ENCODE measurements at regions of chr7 and their contacts with region 1.

Region 1: GRCh38 chr7:29748286-29749108 is 57.8 kb upstream of the WIPF3 start:
- DNase-seq: peak in 1 of 2 experiments; percentile 69
- H3K4me3 ChIP-seq: no peak overlapping the region
- H3K27ac ChIP-seq: no peak overlapping the region
- H3K4me1 ChIP-seq: peaks cover 4% of the 10 kb centered on the region; the same call in 1 of the 2 replicates
- H3K27me3 ChIP-seq: no peaks in the 10 kb centered on the region
- CTCF ChIP-seq: peak; percentile 85

Region 2: DNA sequence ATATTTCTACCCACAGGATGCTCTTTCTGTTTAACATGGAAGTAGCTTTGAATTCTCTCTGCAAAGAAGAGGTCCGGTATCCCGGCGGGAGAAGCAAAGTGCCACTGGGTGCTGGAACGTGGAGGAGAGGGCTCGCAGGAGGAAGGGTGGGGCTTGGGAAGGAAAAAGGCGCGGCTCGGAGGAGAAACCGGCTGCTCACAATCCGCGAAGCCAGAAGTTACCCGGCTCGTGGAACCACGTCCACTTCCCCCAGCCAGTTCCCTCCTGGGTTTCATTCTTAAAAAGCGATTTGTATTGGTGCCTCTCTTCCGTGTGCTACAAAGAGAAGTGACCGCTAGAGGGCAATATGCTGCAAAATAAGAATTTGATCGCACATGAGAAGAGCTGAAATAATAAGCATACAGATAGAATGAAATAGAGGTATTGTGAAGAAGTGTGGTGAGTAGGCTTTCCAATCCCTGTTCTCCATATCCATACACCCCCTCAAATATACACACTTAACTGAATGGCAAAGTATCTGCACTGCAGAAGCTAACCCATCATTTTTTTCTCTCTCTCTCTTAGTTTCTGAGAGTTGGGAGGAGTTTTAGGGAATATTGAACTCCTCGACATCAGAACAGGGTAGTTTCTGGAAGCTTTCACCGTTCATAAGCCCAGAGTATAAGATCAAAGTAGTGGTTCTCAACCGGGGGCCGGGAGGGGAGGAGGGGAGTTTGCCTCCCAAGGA is 821.5 kb before region 1 on chr7:
- CTCF ChIA-PET with region 1: no interaction called
- POLR2A ChIA-PET with region 1: no interaction called
- intact Hi-C with region 1: loop called (anchors 10 kb)
- DNase-seq: peak; percentile 45 to 82
- H3K4me3 ChIP-seq: peak overlapping the region; percentile 54
- H3K27ac ChIP-seq: no peak overlapping the region
- H3K4me1 ChIP-seq: peaks cover 13% of the 10 kb centered on the region; the same call in 1 of the 2 replicates
- H3K27me3 ChIP-seq: no peaks in the 10 kb centered on the region
- CTCF ChIP-seq: peak; percentile 97

Region 3: DNA sequence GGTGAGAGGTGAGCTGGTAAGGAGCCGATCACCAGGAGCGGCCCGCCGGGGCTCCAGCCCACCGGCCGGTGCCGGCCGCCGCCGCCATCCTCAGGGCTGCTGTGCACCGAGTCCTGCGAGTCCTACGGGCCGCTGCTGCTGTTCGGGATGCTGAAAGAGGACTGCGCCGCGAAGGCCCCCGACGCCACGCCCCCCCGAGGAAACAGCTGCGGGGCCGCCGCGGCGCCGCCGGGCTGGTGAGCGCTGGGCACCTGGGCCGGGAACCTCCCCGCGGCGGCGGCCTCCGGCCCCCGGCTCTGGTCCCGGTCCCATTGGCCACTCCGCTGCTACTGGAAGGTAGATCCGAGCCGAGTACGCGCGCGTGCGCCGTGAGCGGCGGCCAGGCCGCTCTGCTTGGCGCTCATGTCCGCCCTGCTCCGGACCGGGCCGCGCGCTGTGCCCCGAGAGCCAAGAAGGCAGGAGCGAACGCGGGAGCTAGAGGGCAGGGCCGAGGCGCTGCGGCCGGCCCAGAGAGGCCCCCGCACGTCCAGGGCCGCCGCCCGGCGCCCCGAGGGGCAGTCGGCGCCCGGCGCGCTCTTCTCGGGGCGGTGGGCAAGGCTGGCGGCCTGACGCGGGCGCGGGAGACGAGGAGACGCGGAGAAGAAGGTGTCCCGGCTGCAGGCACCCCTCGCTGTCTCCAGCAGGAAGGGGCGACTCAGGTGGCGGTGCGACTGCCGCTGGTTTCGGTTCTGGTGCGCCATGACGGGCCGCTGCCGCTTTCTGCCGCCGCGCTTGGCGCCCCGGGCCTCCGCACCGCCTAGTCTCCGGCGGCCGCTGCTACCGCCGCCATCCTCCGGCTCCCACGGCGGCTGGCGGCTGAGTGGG is 63.5 kb before region 1 on chr7:
- CTCF ChIA-PET with region 1: no interaction called
- POLR2A ChIA-PET with region 1: no interaction called
- intact Hi-C with region 1: loop called (anchors 10 kb)
- DNase-seq: peak; percentile 48 to 77
- H3K4me3 ChIP-seq: peak overlapping the region; percentile 97
- H3K27ac ChIP-seq: peak overlapping the region; percentile 64
- H3K4me1 ChIP-seq: peaks cover 44% of the 10 kb centered on the region
- H3K27me3 ChIP-seq: no peaks in the 10 kb centered on the region
- CTCF ChIP-seq: no peak

Region 4: GRCh38 chr7:29878081-29878688 is 129.7 kb after region 1 on chr7:
- CTCF ChIA-PET with region 1: no interaction called
- POLR2A ChIA-PET with region 1: no interaction called
- intact Hi-C with region 1: loop called (anchors 10 kb)
- DNase-seq: peak; percentile 50 to 59
- H3K4me3 ChIP-seq: no peak overlapping the region
- H3K27ac ChIP-seq: no peak overlapping the region
- H3K4me1 ChIP-seq: no peaks in the 10 kb centered on the region
- H3K27me3 ChIP-seq: no peaks in the 10 kb centered on the region
- CTCF ChIP-seq: peak; percentile 90